Common myeloid progenitor, CD34-positive (primary cell): ENCODE measurements at regions of chr2 and their contacts with region 1.

Region 1: DNA sequence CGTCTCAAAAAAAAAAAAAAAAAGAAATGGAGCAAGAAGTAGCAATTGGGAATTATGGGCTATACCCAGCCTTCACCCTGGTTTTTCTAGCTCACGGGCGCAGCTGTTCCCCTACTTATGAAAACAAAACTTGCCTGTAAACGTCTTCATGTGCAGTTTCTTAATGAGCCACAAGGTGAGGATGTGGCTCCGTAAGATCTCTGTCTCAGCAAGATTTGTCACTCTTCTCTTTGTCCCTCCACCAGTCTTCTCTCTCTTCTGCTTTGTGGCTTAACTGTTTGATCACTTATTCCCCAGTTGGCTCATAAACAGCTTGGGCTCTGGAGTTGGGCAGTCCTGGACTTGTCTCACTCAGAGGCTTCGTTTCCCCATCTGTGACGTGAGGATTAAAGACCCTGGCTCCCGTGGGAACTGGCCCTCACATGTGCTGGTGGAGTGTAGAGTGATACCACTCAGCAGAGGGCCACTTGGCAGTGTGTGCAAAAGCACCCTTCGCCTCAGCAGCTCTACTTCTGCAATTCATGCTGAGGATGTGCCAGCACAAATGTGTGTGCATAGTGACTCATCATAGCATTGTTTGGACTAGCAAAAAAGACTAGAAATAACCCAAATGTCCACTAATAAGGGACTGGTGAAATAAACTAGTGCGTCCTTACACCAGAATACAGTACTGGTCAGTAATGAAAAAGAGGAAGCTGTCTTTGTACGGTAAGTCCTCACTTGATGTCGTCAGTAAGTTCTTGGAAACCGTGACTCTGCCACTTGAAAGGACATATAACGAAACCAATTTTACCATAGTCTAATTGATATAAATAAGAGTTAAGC is 8.7 kb downstream of the CEP68 start:
- DNase-seq: peak; percentile 91 to 98 (median 96)
- H3K4me3 ChIP-seq: peak overlapping the region in 4 of 7 experiments; percentile 28 to 66 (median 33)
- H3K27ac ChIP-seq: peak overlapping the region; percentile 62 to 81
- H3K4me1 ChIP-seq: peaks cover 18 to 78% (median 72%) of the 10 kb centered on the region in 4 experiments
- H3K27me3 ChIP-seq: no peaks in the 10 kb centered on the region

Region 2: DNA sequence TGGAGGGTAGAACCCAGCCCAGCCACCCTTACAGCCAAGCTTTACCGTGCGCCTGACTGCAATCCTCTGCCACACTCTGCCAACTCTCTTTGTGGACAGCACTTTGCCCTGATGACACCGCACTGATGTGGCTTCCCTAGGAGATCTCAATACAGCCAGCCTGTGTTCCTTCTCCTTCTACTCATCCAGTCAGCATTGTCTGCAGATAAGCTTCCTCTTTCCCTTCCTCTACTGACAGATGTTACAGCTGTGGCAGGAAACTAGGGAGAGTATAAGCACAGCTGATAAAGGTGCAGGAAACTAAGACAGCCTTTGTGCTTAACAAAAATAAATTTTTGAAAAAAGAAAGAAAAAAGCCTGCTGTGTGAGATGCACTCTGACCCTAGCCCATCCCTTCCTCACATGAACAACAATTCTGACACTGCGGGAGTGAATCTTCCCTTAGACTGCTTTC is 16.3 kb after region 1 on chr2:
- CTCF ChIA-PET with region 1: interaction called, 20 read pairs
- POLR2A ChIA-PET with region 1: interaction called, 11 read pairs
- DNase-seq: peak; percentile 91 to 99 (median 98)
- H3K4me3 ChIP-seq: peak overlapping the region in 1 of 7 experiments; percentile 48
- H3K27ac ChIP-seq: peak overlapping the region; percentile 42 to 69
- H3K4me1 ChIP-seq: peaks cover 6 to 42% (median 33%) of the 10 kb centered on the region in 4 experiments
- H3K27me3 ChIP-seq: no peaks in the 10 kb centered on the region

Region 3: DNA sequence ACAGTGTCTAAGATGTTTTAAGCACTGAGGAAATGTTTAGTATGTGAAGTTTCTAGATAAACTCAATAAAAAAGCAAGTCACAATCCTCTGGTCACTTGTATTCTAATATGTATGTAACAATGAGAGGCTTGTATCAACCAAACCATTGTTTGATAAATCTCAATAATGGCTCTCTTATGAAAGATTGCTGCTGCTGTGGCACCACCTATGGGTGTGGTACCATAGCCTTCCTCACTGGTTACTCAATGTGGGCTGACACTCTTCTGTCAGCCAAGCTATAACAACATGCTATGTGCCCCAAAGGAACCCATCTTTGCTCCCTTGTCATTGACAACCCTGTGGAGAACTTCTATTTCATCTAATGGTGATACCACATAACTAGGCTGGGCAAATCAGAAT is 77.6 kb after region 1 on chr2:
- CTCF ChIA-PET with region 1: interaction called, 17 read pairs
- POLR2A ChIA-PET with region 1: no interaction called
- DNase-seq: peak; percentile 29 to 60 (median 56)
- H3K4me3 ChIP-seq: no peak overlapping the region
- H3K27ac ChIP-seq: no peak overlapping the region
- H3K4me1 ChIP-seq: no peaks in the 10 kb centered on the region
- H3K27me3 ChIP-seq: no peaks in the 10 kb centered on the region

Region 4: GRCh38 chr2:65186872-65187851 is 122.2 kb after region 1 on chr2:
- CTCF ChIA-PET with region 1: interaction called, 24 read pairs
- POLR2A ChIA-PET with region 1: interaction called, 3 read pairs
- DNase-seq: peak; percentile 76 to 87 (median 83)
- H3K4me3 ChIP-seq: no peak overlapping the region
- H3K27ac ChIP-seq: no peak overlapping the region
- H3K4me1 ChIP-seq: peaks cover 0 to 4% (median 3%) of the 10 kb centered on the region in 4 experiments
- H3K27me3 ChIP-seq: no peaks in the 10 kb centered on the region

Region 5: GRCh38 chr2:65554765-65555591 is 490.0 kb after region 1 on chr2:
- CTCF ChIA-PET with region 1: no interaction called
- POLR2A ChIA-PET with region 1: no interaction called
- DNase-seq: peak in 1 of 3 donors; percentile 24
- H3K4me3 ChIP-seq: no peak overlapping the region
- H3K27ac ChIP-seq: no peak overlapping the region
- H3K4me1 ChIP-seq: no peaks in the 10 kb centered on the region
- H3K27me3 ChIP-seq: no peaks in the 10 kb centered on the region